Activated CD4-positive, alpha-beta T cell treated with anti-CD3 and anti-CD28 coated beads, Interleukin-2, amount 10 ng/mL, durations not matched to agents 24 days and 14 days (primary cell): ENCODE measurements at regions of chrX and their contacts with region 1.

Region 1: GRCh38 chrX:104136241-104137019 is 20.4 kb downstream of the SLC25A53 start:
- DNase-seq: peak; percentile 84
- H3K4me3 Mint-ChIP-seq: no peak overlapping the region
- H3K27ac Mint-ChIP-seq: no peak overlapping the region
- H3K4me1 Mint-ChIP-seq: peaks cover 15% of the 10 kb centered on the region
- H3K27me3 Mint-ChIP-seq: no peaks in the 10 kb centered on the region

Region 2: GRCh38 chrX:104098151-104098808 is 38.1 kb before region 1 on chrX:
- intact Hi-C with region 1: loop called (anchors 1 kb)
- DNase-seq: peak; percentile 79
- H3K4me3 Mint-ChIP-seq: no peak overlapping the region
- H3K27ac Mint-ChIP-seq: no peak overlapping the region
- H3K4me1 Mint-ChIP-seq: no peaks in the 10 kb centered on the region
- H3K27me3 Mint-ChIP-seq: peaks cover 13% of the 10 kb centered on the region

Region 3: DNA sequence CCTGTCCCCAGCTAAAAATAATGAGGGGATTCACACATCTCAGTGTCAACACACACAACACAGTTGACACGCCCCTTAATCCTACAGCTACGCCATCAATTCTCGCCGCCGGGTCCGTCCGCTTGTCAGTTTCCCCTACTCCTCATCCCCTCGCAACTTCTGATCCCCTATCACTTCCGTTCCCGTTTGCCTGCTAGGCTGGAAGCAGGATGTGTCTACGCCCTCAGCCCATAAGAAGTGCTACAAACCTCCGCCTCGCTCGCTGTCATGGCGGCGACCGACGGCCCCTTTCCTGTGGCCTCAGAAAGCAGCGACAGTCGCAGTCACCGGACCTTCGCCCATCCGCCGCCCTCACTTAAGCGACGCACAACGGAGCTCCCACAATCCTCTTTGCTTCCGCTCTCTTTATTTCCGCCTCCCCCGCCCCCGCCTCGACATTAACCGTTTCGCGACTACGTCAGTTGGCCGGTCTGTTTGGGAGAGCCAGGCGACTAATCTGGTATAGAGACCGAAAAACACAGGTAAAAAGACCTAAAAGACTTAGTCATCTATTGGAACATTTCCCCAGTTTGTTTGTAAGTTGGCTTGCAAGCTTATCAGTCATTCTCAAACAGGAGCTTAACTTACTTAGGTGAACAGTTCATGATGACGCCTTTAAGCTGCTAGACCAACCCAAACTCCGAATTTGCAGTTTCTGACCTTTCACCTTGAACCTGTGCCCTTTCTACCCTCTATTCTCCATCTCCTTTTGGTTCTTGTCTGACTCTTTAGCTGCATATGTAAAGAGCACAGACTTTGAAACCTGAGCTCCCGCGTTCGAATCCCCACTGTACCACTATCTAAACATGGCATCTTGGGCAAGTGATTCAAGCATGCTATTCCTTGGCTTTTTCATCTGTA is 20.4 kb after region 1 on chrX and contains the start of gene SLC25A53:
- intact Hi-C with region 1: no loop called
- DNase-seq: peak; percentile 92
- H3K4me3 Mint-ChIP-seq: peak within 1 kb of the TSS; percentile 98
- H3K27ac Mint-ChIP-seq: peak within 1 kb of the TSS; percentile 99
- H3K4me1 Mint-ChIP-seq: peaks cover 7% of the 10 kb centered on the region
- H3K27me3 Mint-ChIP-seq: no peaks in the 10 kb centered on the region
- total RNA-seq, gene SLC25A53: 4.2 and 4.3 TPM in 2 replicates